A549 (cell line): ENCODE measurements at regions of chr2 and their contacts with region 1.

Region 1: GRCh38 chr2:68467077-68467960 is at the starts of genes APLF and FBXO48:
- DNase-seq: peak; percentile 97 to 99
- ATAC-seq: peak; percentile 95 to 99
- H3K4me3 ChIP-seq: peak within 1 kb of the TSS; percentile 78
- H3K27ac ChIP-seq: peak within 1 kb of the TSS; percentile 85 to 92
- H3K4me1 ChIP-seq: peaks cover 22% of the 10 kb centered on the region
- CTCF ChIP-seq: no peak
- EP300 ChIP-seq: no peak
- POLR2A ChIP-seq: peak; percentile 63
- RAD21 ChIP-seq: no peak
- polyA plus RNA-seq, gene APLF: 2.1 and 2.8 TPM in 2 replicates
- polyA plus RNA-seq, gene FBXO48: 1.4 and 2.1 TPM in 2 replicates

Region 2: DNA sequence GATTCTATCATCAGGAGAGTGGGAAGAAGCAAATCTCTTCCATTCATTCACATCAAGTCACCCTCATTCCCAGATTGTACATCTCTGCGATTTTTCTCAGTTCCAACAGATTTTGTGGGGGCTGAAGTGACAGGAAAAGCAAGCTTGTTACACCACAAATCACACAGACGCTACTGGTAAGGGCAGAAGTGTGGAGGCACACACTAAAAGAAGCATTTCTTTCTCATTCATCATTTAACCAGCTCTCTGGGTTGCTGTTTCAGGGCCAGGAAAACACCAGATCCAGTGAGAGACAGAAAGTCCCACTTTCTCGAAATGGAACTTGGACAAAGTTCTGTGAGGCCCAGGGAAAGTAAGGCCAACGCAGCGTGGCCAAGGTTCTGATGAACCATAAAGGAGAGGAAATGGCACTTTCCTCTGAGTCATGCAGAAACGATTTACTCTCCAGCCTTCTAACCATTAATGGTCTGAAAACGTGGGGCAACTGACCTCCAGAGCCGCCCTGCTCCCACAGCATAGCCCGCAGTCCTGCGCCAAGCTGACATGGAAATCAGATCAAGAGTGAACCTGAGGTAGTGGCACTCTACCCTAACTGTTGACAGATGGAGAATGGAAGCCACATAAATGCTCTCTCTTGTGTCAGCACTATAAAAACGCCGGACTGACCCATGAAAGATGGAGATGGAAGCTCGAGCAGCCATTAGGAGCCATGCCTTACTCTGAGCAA is 595.5 kb before region 1 on chr2:
- CTCF ChIA-PET with region 1: no interaction called
- POLR2A ChIA-PET with region 1: no interaction called
- DNase-seq: no peak
- ATAC-seq: peak in 1 of 2 experiments; percentile 59; a peak in 3 of 6 replicates
- H3K4me3 ChIP-seq: no peak overlapping the region
- H3K27ac ChIP-seq: no peak overlapping the region
- H3K4me1 ChIP-seq: no peaks in the 10 kb centered on the region
- CTCF ChIP-seq: no peak
- EP300 ChIP-seq: no peak
- POLR2A ChIP-seq: no peak
- RAD21 ChIP-seq: no peak

Region 3: DNA sequence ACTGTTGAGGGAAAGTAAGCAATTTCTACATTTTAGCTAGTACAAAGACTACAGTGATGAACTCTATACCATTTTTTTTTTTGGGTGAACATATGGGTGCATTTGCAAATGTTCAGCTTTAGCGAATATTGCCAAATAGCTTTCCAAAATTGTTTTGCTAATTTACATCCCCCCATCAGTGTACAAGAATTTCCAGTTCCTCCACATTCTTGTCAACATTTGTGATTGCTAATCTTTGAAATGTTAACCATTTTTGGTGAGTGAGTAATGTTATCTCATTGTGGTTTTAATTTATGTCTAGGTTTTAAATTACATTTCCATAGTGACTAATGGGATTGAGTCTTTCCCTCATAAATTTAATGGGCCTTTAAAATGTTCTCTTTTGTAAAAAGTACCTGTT is 131.1 kb before region 1 on chr2:
- CTCF ChIA-PET with region 1: no interaction called
- POLR2A ChIA-PET with region 1: no interaction called
- DNase-seq: no peak
- ATAC-seq: no peak
- H3K4me3 ChIP-seq: no peak overlapping the region
- H3K27ac ChIP-seq: no peak overlapping the region
- H3K4me1 ChIP-seq: no peaks in the 10 kb centered on the region
- CTCF ChIP-seq: no peak
- EP300 ChIP-seq: no peak
- POLR2A ChIP-seq: no peak
- RAD21 ChIP-seq: no peak

Region 4: DNA sequence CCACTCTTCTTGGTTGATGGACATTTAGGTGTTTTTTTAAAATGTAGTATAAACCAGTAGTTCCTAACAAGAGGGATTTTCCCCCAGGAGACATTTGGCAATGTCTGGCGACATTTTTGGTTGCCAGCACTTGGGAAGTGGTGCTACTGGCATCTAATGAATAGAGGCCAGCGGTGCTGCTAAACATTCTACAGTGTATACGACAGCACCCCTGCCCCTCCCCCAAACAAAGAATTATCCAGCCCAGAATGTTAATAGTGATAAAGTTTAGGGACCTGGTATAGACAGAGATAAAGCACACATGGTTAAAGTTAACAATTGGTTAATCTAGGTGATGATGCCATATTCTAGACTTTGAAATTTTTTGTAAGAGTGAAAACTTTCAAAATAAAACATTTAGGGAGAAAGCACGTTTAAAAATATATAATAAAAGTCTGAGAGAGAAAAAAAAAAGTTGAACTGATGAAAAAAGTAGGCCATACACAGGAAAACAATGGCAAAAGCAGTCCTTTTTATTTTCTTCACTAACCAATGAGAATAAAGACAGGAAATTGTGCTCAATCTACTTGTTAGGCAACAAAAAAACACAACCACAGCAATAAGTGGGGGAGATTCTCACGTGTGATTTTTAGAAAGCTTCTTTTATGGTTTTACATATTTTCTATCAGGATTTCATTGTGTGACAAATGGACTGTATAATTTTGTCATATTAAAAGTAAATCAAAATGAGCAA is 15.0 kb before region 1 on chr2:
- CTCF ChIA-PET with region 1: interaction called, 27 read pairs
- POLR2A ChIA-PET with region 1: interaction called, 6 read pairs
- DNase-seq: no peak
- ATAC-seq: no peak
- H3K4me3 ChIP-seq: no peak overlapping the region
- H3K27ac ChIP-seq: no peak overlapping the region
- H3K4me1 ChIP-seq: no peaks in the 10 kb centered on the region
- CTCF ChIP-seq: no peak
- EP300 ChIP-seq: no peak
- POLR2A ChIP-seq: no peak
- RAD21 ChIP-seq: no peak

Region 5: GRCh38 chr2:68487773-68488355 is 20.5 kb after region 1 on chr2:
- CTCF ChIA-PET with region 1: interaction called, 12 read pairs
- POLR2A ChIA-PET with region 1: no interaction called
- DNase-seq: peak; percentile 21 to 41
- ATAC-seq: peak in 1 of 2 experiments; percentile 82; a peak in 4 of 6 replicates
- H3K4me3 ChIP-seq: no peak overlapping the region
- H3K27ac ChIP-seq: no peak overlapping the region
- H3K4me1 ChIP-seq: no peaks in the 10 kb centered on the region
- CTCF ChIP-seq: peak; percentile 71; the same call in 2 of the 3 replicates
- EP300 ChIP-seq: no peak
- POLR2A ChIP-seq: no peak
- RAD21 ChIP-seq: peak; percentile 65 to 74

Region 6: DNA sequence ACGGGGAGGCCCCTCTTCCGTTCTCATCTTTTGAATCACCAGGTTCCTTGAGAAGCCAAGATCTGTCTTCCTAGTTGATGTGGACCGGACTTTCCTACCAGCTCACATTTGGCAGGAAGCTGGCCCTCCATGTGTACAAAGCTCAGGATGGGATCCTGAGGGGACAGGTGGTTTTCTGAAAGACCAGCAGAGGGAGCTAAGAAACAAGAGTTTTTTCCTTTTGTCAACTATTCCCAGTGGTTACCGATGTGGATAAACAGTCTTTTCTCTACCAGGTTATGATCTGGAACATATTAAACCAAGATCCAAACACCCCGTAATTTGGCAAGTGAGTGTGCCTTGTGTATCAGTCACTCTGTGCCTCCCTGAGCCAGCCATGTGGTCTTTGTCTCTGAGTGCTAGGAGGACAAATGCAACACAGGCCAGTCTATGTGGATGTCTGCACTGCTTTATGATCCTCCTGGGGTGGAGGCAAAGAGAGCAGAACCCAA is 242.1 kb after region 1 on chr2:
- CTCF ChIA-PET with region 1: interaction called, 31 read pairs
- POLR2A ChIA-PET with region 1: no interaction called
- DNase-seq: peak; percentile 62 to 70
- ATAC-seq: peak; percentile 94 to 98
- H3K4me3 ChIP-seq: no peak overlapping the region
- H3K27ac ChIP-seq: no peak overlapping the region
- H3K4me1 ChIP-seq: 0 out of 3 replicates have a peak, but pooled peaks cover 4% of the 10 kb centered on the region
- CTCF ChIP-seq: peak; percentile 89
- EP300 ChIP-seq: no peak
- POLR2A ChIP-seq: no peak
- RAD21 ChIP-seq: peak; percentile 77

Region 7: GRCh38 chr2:68909793-68910674 is 442.7 kb after region 1 on chr2:
- CTCF ChIA-PET with region 1: interaction called, 14 read pairs
- POLR2A ChIA-PET with region 1: no interaction called
- DNase-seq: peak; percentile 60 to 85
- ATAC-seq: peak in 1 of 2 experiments; percentile 66; a peak in 3 of 6 replicates
- H3K4me3 ChIP-seq: no peak overlapping the region
- H3K27ac ChIP-seq: peak overlapping the region in 1 of 2 experiments; percentile 85; a peak in 4 of 6 replicates
- H3K4me1 ChIP-seq: peaks cover 25% of the 10 kb centered on the region
- CTCF ChIP-seq: peak; percentile 79
- EP300 ChIP-seq: no peak
- POLR2A ChIP-seq: no peak
- RAD21 ChIP-seq: peak; percentile 76 to 80

Region 8: DNA sequence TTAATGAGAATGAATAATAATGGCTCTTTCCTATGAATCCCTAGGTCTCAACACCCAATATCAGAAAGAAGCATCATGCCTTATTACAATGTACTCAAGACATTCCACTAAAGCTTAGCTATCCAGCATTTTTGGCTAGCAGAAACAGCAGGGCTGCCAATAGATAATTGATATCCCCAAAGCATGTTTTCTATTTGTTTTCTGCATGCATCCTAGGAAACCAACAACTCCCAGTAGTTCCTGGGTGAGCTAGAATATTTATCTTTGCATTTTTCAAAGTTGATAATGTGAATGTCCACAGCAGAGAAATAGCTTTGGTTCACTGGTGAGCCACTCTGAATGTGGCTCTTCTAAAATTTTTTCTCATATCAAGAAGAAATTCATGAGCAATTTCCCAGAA is 539.9 kb after region 1 on chr2:
- CTCF ChIA-PET with region 1: no interaction called
- POLR2A ChIA-PET with region 1: no interaction called
- DNase-seq: no peak
- ATAC-seq: no peak
- H3K4me3 ChIP-seq: no peak overlapping the region
- H3K27ac ChIP-seq: 0 out of 6 replicates have a peak overlapping the region, but pooled peaks of 1 of the 2 experiments have one; percentile 6
- H3K4me1 ChIP-seq: peaks cover 6% of the 10 kb centered on the region; the same call in 2 of the 3 replicates
- CTCF ChIP-seq: no peak
- EP300 ChIP-seq: no peak
- POLR2A ChIP-seq: no peak
- RAD21 ChIP-seq: no peak